OCI-LY7 (cell line): ENCODE measurements at regions of chr5 and their contacts with region 1.

Region 1: DNA sequence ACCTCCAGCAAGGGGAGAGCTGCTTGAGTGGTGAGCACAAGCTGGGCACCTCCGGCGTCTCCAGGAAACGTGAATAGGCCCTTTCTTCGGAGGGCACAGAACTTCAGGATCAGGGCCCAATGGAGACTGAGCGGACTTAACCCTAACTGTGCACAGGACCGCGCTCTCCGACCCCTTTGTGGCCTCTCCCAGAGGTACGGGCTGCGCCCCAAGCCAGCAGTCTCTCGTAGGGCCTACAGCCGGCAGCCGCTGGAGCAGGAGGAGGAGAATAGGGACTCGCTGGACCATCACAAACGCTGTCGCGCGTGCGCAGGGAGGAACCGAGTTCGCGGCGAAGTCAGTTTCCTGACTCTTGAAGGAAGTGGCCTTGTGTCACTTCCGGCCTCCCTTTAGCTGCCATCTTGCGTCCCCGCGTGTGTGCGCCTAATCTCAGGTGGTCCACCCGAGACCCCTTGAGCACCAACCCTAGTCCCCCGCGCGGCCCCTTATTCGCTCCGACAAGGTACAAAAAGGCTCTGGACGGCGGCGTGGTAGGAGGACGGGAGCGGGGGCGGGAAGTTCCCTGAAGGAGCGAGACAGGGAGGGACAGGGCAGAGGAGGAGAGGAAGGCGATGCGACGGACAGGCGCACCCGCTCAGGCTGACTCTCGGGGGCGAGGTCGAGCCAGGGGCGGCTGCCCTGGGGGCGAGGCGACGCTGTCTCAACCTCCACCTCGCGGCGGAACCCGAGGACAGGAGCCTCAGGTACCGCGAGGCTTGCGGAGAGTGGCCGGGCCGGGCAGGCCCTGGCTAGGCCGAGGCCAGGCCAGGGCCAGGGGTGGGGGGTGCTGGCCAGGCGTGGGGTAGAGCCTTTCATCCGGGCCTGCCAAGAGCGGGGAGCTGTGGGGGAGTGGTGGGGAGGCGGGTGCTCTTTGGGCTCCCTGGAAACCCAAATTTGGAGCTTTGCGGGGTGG is at the start of gene BTF3:
- DNase-seq: peak; percentile 97
- H3K4me3 ChIP-seq: peak within 1 kb of the TSS; percentile 98
- H3K27ac ChIP-seq: peak within 1 kb of the TSS; percentile 69
- H3K4me1 ChIP-seq: peaks cover 37% of the 10 kb centered on the region
- CTCF ChIP-seq: no peak
- total RNA-seq, gene BTF3: 350 and 372 TPM in 2 replicates

Region 2: GRCh38 chr5:72955768-72956323 is 542.5 kb before region 1 on chr5 and contains the start of gene FCHO2:
- CTCF ChIA-PET with region 1: no interaction called
- POLR2A ChIA-PET with region 1: no interaction called
- intact Hi-C with region 1: loop called (anchors 5 kb)
- DNase-seq: peak; percentile 95
- H3K4me3 ChIP-seq: peak within 1 kb of the TSS; percentile 77
- H3K27ac ChIP-seq: no peak within 1 kb of the TSS
- H3K4me1 ChIP-seq: peaks cover 18% of the 10 kb centered on the region
- CTCF ChIP-seq: peak; percentile 83
- total RNA-seq, gene FCHO2: 3.4 and 7.8 TPM in 2 replicates

Region 3: GRCh38 chr5:73565139-73565968 is 67.0 kb after region 1 on chr5 and contains the starts of genes ANKRA2 and UTP15:
- CTCF ChIA-PET with region 1: no interaction called
- POLR2A ChIA-PET with region 1: interaction called, 10 read pairs
- intact Hi-C with region 1: loop called (anchors 1 kb)
- DNase-seq: peak; percentile 98
- H3K4me3 ChIP-seq: peak within 1 kb of the TSS; percentile 80
- H3K27ac ChIP-seq: peak within 1 kb of the TSS; percentile 73
- H3K4me1 ChIP-seq: peaks cover 31% of the 10 kb centered on the region
- CTCF ChIP-seq: no peak
- total RNA-seq, gene ANKRA2: 8.6 and 13.1 TPM in 2 replicates
- total RNA-seq, gene UTP15: 21.5 and 22.8 TPM in 2 replicates